Lower leg skin (tissue), 4 donors: ENCODE measurements at regions of chr7 and their contacts with region 1.

Region 1: GRCh38 chr7:102390697-102391484 is 5.3 kb upstream of the PRKRIP1 start:
- DNase-seq: peak; percentile 63 to 95
- H3K4me3 ChIP-seq: no peak overlapping the region
- CTCF ChIP-seq: peak in 1 of 3 donors; percentile 41
- POLR2A ChIP-seq: no peak

Region 2: DNA sequence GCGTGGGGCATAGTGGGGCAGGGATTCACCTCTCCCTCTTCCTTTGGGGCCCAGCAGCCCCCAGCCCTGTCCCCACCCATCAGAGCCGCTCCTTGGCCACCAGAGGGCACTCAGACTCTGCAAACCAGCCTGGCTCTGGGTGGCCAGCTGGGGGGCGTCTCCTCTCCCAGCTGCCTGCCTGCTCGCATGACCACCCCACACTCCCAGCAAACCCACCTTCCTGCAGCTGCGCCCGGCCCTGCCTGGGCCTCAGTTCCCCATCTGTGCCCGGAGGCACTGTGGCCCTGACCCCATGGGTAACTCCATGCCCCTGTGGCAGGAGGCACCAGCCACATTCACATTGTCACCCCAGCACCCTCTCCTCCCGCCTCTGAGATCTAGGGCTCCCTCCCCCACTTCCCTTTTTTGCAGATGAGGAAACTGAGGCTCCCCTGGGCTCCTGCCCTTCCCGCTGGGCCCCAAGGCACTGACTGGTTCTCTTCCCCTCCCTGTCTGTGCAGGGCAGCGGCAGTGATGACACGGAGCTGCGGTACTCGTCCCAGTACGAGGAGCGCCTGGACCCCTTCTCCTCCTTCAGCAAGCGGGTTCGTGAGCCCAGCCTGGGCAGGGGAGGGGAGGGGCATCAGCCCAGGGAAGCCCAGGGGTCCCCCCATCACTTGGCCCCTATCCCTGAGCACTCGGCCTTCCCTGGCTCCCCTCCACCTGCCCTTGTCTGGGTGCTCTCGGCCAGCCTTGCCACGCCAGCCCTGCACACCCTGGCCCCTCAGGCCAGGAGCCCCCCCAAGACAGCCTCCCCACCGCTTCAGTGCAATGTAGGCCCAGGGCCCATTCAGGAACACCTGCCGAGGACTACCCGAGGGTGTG is 111.1 kb before region 1 on chr7:
- intact Hi-C with region 1: loop called (anchors 5 kb)
- DNase-seq: no peak
- H3K4me3 ChIP-seq: no peak overlapping the region
- CTCF ChIP-seq: no peak
- POLR2A ChIP-seq: no peak

Region 3: DNA sequence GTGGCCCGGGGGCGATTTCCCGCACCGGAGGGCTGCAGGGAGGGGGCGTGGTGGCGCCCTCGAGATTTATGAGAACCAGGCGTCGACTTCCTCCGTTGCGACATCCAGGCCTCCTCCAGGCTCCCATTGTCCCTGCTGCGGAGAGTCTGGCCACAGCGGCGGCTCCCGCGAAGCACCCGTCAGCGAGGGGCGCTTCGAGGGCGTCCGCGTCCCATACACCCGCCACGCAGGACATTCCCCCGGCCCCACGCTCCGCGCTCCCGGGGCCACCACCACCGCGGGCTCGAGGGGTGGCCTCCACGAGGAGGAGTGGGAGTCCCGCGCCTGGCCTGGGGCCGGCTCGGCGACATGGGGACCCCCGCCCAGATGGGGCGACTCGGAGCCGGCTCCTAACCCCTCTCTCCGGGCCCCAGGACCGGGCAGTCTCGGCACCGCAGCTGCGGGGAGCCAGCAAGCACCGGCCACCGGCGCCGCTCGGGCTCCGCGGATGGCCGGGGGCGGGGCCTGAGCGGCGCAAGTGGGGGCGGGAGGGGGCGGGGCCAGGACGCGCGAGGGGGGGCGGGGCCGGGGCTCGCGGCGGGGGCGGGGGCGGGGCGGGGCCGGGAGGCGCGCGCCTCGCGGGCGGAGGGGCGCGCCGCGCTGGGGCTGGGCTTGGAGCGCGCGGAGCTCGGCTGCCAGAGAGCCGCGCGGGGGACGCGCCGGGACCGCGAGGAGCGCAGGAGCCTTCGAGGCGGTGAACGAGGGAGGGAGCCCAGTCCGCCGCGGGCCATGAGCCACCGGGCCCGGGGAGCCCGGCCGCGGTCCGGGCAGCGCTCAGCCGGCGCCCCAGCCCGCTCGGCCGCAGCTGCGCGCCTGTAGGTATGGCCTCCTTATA is 104.4 kb before region 1 on chr7 and contains the start of gene SH2B2:
- intact Hi-C with region 1: loop called (anchors 5 kb)
- DNase-seq: peak; percentile 56 to 96
- H3K4me3 ChIP-seq: peak within 1 kb of the TSS; percentile 70
- CTCF ChIP-seq: no peak
- POLR2A ChIP-seq: no peak
- total RNA-seq, gene SH2B2: 13.9 to 28.6 (median 20.6) TPM